ENCODE measurements at regions of chr7 and their contacts with region 1.

Region 1: GRCh38 chr7:80459776-80460510 is 51.9 kb downstream of the GNAT3 start:
- DNase-seq: no peak
- ATAC-seq: no peak
- H3K4me3 ChIP-seq: no peak overlapping the region
- H3K27ac ChIP-seq: no peak overlapping the region
- H3K4me1 ChIP-seq: peaks cover 0 to 1% of the 10 kb centered on the region in 2 donors
- H3K27me3 ChIP-seq: no peaks in the 10 kb centered on the region

Region 2: GRCh38 chr7:80060218-80060806 is 399.6 kb before region 1 on chr7:
- intact Hi-C with region 1: loop called in 1 of 2 experiments (anchors 5 kb)
- DNase-seq: no peak
- ATAC-seq: no peak
- H3K4me3 ChIP-seq: no peak overlapping the region
- H3K27ac ChIP-seq: no peak overlapping the region
- H3K4me1 ChIP-seq: no peaks in the 10 kb centered on the region
- H3K27me3 ChIP-seq: no peaks in the 10 kb centered on the region